Left cardiac atrium (tissue), 4 donors: ENCODE measurements at regions of chr10 and their contacts with region 1.

Region 1: DNA sequence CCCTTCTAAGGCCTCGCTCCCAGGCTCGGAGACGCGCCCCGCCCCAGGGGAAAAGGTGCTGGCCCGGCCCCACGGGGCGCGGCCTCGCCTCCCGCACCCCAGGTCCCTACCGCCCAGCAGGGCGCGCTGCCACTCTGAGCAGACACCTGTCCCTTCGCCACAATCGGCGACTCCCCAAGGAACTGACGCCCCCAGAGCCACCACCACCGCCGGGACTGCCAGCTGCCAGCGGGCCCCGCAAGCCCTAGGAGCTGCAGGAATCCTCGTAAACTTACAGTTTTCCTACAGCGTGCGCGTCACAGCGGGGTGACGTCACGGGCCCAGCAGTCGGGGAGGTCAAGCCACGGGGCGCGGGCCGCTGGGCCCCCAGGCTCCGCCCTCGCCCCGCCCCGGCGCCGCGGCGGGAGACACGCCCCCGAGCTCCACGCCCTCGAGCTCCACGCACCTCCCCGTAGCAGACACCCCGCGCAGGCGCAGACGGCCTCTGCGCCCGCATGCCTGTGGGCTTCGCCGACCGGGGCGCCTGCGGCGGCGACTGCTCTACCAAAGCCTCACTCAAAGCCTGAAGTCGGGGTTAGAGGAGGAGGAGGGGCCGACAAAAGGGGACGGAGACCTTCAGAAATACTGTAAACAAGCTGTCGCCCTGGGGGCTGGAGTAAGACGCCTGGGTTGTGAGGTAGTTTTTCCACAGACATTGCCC is at the start of gene ZNF438:
- DNase-seq: peak; percentile 95
- ATAC-seq: peak; percentile 97 to 98
- total RNA-seq, gene ZNF438: 11.4 to 11.6 TPM

Region 2: GRCh38 chr10:30783939-30784500 is 247.7 kb before region 1 on chr10:
- intact Hi-C with region 1: loop called in 1 of 2 experiments (anchors 2 kb)
- DNase-seq: peak; percentile 89
- ATAC-seq: peak; percentile 85 to 89

Region 3: DNA sequence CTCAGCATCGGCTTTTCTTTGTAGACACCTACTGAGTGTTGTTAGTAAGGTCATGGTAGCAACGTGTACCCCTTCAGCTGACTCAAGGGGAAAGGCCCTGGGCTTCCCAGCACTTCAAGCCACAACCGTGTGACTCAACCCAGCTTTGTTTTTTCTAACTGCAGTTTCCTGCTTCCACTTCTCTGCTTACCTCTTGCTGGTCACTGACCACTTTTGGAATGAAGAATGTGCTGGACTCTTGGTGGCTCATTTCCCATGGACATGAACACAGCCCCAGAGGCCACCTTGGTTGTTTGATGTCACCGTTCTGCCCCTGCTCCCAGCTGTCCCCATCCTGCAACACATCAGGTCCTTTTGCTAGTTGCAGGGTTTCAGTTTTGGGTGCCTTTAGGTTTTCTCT is 69.4 kb after region 1 on chr10:
- intact Hi-C with region 1: no loop called
- DNase-seq: no peak
- ATAC-seq: peak in 1 of 2 donors; percentile 32

Region 4: GRCh38 chr10:31133628-31134302 is 102.1 kb after region 1 on chr10:
- intact Hi-C with region 1: loop called in 1 of 2 experiments (anchors 10 kb)
- DNase-seq: peak; percentile 87
- ATAC-seq: peak; percentile 95

Region 5: GRCh38 chr10:31157123-31158010 is 125.7 kb after region 1 on chr10:
- intact Hi-C with region 1: loop called in 1 of 2 experiments (anchors 10 kb)
- DNase-seq: peak; percentile 68
- ATAC-seq: peak; percentile 91 to 97